GM18951 (cell line): ENCODE measurements at regions of chr4 and their contacts with region 1.

Region 1: GRCh38 chr4:93791570-93792195 is 36.9 kb upstream of the ATOH1 start:
- POLR2A ChIP-seq: no peak

Region 2: GRCh38 chr4:94115687-94116086 is 324.0 kb after region 1 on chr4:
- in situ Hi-C with region 1: loop called (anchors 25 kb)
- POLR2A ChIP-seq: no peak